Gastrocnemius medialis (tissue), 4 donors: ENCODE measurements at regions of chr1 and their contacts with region 1.

Region 1: GRCh38 chr1:154220071-154220969 is at the start of gene UBAP2L:
- DNase-seq: peak; percentile 99
- ATAC-seq: peak; percentile 91 to 93
- H3K4me3 ChIP-seq: peak within 1 kb of the TSS; percentile 82 to 96 (median 88)
- H3K27ac ChIP-seq: peak within 1 kb of the TSS; percentile 96 to 100 (median 98)
- H3K4me1 ChIP-seq: peaks cover 57 to 63% of the 10 kb centered on the region in 2 donors
- H3K27me3 ChIP-seq: no peaks in the 10 kb centered on the region
- CTCF ChIP-seq: no peak
- POLR2A ChIP-seq: peak; percentile 87 to 92
- total RNA-seq, gene UBAP2L: 38.5 to 72.8 (median 50.8) TPM

Region 2: GRCh38 chr1:154183045-154183915 is 37.0 kb before region 1 on chr1:
- in situ Hi-C with region 1: no loop called
- intact Hi-C with region 1: loop called (anchors 1 kb)
- DNase-seq: peak; percentile 88 to 92
- ATAC-seq: peak; percentile 73 to 83
- H3K4me3 ChIP-seq: peak overlapping the region; percentile 69 to 89 (median 82)
- H3K27ac ChIP-seq: peak overlapping the region; percentile 86 to 93 (median 90)
- H3K4me1 ChIP-seq: peaks cover 60 to 61% of the 10 kb centered on the region in 2 donors
- H3K27me3 ChIP-seq: no peaks in the 10 kb centered on the region
- CTCF ChIP-seq: peak in 1 of 5 experiments; percentile 35
- POLR2A ChIP-seq: peak; percentile 94 to 96

Region 3: DNA sequence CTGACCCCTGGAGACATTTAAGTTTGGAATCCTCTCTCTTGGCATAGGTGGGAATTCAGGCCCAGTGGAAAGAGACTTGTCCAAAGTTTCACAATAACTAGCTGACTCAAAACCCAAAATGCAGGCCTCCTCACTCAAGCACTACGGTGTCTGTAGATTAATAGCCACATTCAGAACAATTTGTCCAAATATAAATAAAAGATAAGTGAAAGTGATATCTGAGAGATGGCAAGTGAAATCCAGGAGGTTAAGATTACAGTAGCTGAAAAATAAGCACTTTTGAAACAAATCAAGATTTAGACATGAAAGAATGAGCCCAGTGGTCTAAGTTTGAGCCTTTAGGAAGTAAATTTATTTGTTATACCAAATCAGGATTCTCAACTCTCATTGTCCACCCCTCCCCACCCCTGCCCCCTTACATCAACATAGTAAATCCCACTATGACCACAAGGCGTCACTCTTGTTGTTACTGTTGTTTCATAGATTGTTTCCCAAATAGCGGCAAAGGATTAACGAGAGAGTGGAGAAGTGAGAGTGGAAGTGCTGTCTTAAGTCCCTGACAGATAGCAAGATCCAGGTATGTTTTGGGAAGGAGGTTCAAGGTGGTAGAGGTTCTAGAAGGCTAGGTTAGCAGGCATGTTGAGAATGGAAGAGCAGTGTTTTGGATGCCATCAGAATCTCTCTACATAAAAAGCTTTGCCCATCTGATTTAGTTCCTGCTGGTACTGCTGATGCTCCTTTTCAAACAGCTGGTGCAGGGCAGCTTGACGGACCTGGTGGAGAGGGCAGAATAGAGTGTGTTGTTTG is 21.4 kb before region 1 on chr1:
- in situ Hi-C with region 1: no loop called
- intact Hi-C with region 1: loop called (anchors 2 kb)
- DNase-seq: no peak
- ATAC-seq: peak; percentile 50 to 59
- H3K4me3 ChIP-seq: no peak overlapping the region
- H3K27ac ChIP-seq: peak overlapping the region; percentile 86 to 93 (median 90)
- H3K4me1 ChIP-seq: peaks cover 7 to 13% of the 10 kb centered on the region in 2 donors
- H3K27me3 ChIP-seq: no peaks in the 10 kb centered on the region
- CTCF ChIP-seq: peak in 3 of 5 experiments; percentile 39 to 58 (median 51)
- POLR2A ChIP-seq: no peak

Region 4: GRCh38 chr1:154431586-154432373 is 211.5 kb after region 1 on chr1:
- in situ Hi-C with region 1: no loop called
- intact Hi-C with region 1: loop called (anchors 5 kb)
- DNase-seq: peak; percentile 74 to 85
- ATAC-seq: peak; percentile 51 to 66
- H3K4me3 ChIP-seq: no peak overlapping the region
- H3K27ac ChIP-seq: peak overlapping the region; percentile 80 to 100 (median 91)
- H3K4me1 ChIP-seq: peaks cover 80 to 82% of the 10 kb centered on the region in 2 donors
- H3K27me3 ChIP-seq: no peaks in the 10 kb centered on the region
- CTCF ChIP-seq: no peak
- POLR2A ChIP-seq: peak in 1 of 2 donors; percentile 25